MCF 10A (cell line): ENCODE measurements at regions of chr5 and their contacts with region 1.

Region 1: DNA sequence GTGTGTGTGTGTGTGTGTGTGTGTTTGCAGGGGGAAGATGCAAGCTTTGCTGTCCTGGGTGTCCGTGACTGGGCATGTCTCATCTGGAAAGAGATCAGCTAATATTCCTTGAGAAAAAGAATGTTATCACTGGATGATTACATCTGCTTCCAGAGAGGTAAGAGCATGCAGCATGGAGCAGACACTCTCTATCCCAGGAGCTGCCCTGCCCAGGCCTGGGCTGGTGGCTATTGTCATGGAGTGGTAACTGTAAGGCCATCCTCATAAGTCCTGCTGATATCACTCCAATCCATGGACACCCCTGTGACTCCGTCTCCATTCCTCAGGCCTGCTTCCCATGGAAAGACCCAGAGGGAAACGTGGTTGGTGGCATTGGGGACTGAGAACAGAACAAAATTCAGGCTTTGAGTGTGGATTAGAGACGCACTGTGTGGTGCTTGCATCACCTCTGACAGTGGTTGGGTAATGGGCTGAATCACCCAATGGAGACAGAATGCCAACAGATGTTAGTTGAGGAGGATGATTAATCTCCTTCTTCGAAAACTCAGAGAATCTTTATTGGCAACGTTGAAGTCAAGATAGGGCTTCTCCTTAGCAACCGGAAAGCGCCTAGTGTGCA is 52.0 kb upstream of the KCNIP1 start:
- DNase-seq: peak; percentile 95
- H3K4me3 Mint-ChIP-seq: no peak overlapping the region
- H3K27ac Mint-ChIP-seq: no peak overlapping the region
- H3K4me1 Mint-ChIP-seq: peaks cover 9% of the 10 kb centered on the region
- H3K27me3 Mint-ChIP-seq: no peaks in the 10 kb centered on the region
- CTCF ChIP-seq: no peak

Region 2: GRCh38 chr5:170262061-170263045 is 189.5 kb before region 1 on chr5:
- CTCF ChIA-PET with region 1: no interaction called
- POLR2A ChIA-PET with region 1: no interaction called
- intact Hi-C with region 1: no loop called
- DNase-seq: no peak
- H3K4me3 Mint-ChIP-seq: no peak overlapping the region
- H3K27ac Mint-ChIP-seq: no peak overlapping the region
- H3K4me1 Mint-ChIP-seq: no peaks in the 10 kb centered on the region
- H3K27me3 Mint-ChIP-seq: peaks cover 44% of the 10 kb centered on the region
- CTCF ChIP-seq: no peak

Region 3: GRCh38 chr5:170466988-170467707 is 15.3 kb after region 1 on chr5:
- CTCF ChIA-PET with region 1: interaction called, 9 read pairs
- POLR2A ChIA-PET with region 1: interaction called, 3 read pairs
- intact Hi-C with region 1: loop called (anchors 1 kb)
- DNase-seq: peak; percentile 96
- H3K4me3 Mint-ChIP-seq: no peak overlapping the region
- H3K27ac Mint-ChIP-seq: no peak overlapping the region
- H3K4me1 Mint-ChIP-seq: no peaks in the 10 kb centered on the region
- H3K27me3 Mint-ChIP-seq: no peaks in the 10 kb centered on the region
- CTCF ChIP-seq: no peak

Region 4: DNA sequence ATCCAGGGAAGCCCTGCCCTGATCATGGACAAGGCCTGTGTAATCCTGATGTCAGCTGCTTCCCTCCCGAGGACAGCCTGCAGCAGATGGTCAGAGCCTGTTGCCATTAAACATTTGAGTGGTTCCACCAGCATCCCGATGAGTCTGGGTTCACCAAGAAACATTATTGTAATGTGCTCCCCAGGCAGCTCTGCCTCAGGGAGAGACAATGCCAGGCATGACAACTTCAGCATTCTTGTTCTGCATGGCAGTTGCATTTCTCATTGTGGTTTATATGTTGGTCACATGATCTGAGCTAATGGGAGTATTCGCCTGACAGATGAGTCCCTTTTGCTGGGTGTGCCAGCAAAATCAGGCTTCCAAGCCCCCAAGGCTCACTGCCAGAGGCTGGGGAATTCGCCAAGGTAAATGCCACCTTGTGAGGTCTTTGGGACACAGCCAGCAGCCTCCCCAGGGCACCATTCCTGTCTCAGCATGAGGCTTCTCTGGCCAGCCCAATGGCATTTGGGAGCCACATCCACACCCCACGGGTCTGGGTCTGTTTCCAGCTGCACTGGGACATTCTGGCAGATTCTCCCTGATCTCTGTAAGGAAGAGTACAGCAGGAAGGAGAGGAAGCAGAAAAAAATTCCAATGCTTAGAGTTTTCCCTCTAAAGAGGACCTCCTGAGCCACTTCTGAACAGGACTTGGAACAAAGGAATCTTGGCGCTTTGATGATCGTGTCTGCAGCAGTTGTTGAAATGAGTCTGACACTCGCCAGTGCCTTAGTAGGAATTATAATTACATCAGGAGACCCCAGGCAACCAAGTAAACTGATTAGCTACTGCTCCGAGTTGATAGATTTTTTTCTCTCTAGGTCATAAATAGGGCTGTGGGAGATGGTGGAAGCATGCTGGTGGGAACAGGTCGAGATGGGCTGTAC is 70.6 kb after region 1 on chr5:
- CTCF ChIA-PET with region 1: no interaction called
- POLR2A ChIA-PET with region 1: interaction called, 4 read pairs
- intact Hi-C with region 1: loop called (anchors 2 kb)
- DNase-seq: peak; percentile 90
- H3K4me3 Mint-ChIP-seq: no peak overlapping the region
- H3K27ac Mint-ChIP-seq: no peak overlapping the region
- H3K4me1 Mint-ChIP-seq: peaks cover 27% of the 10 kb centered on the region
- H3K27me3 Mint-ChIP-seq: peaks cover 27% of the 10 kb centered on the region
- CTCF ChIP-seq: no peak